Motor neuron (in vitro differentiated cells): ENCODE measurements at regions of chr14 and their contacts with region 1.

Region 1: GRCh38 chr14:75709207-75709812 is 48.3 kb downstream of the TTLL5 start:
- ATAC-seq: peak; percentile 26 to 90 (median 56)
- H3K4me3 ChIP-seq: no peak overlapping the region
- H3K27ac ChIP-seq: no peak overlapping the region
- H3K4me1 ChIP-seq: peaks cover 0 to 5% of the 10 kb centered on the region in 2 donors

Region 2: GRCh38 chr14:75960231-75960630 is 250.9 kb after region 1 on chr14:
- in situ Hi-C with region 1: loop called in 1 of 9 experiments (anchors 25 kb)
- ATAC-seq: no peak
- H3K4me3 ChIP-seq: no peak overlapping the region
- H3K27ac ChIP-seq: no peak overlapping the region
- H3K4me1 ChIP-seq: no peaks in the 10 kb centered on the region